ENCODE measurements at regions of chr22 and their contacts with region 1.

Region 1: DNA sequence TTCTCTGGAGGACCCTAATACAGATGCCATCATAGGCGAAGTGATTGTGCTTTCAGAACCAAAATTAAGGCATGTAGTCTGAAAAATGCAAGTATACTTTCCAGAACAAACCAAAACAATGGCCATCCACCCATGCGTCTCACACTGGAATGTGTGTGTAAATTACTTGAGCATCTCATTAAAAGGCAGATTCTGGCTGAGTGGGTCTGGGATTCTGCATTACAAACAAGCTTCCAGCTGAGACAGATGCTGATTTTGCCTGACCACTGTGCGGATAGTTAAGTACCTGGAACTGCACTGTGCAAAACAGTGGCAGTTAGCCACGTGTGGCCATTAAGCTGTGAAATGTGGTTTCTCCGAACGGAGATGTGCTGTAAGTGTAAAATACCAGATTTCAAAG is 26.2 kb downstream of the RRP7A start:
- DNase-seq: no peak
- H3K4me3 ChIP-seq: no peak overlapping the region
- H3K27ac ChIP-seq: no peak overlapping the region
- H3K4me1 ChIP-seq: peaks cover 14% of the 10 kb centered on the region
- H3K27me3 ChIP-seq: no peaks in the 10 kb centered on the region
- CTCF ChIP-seq: no peak

Region 2: DNA sequence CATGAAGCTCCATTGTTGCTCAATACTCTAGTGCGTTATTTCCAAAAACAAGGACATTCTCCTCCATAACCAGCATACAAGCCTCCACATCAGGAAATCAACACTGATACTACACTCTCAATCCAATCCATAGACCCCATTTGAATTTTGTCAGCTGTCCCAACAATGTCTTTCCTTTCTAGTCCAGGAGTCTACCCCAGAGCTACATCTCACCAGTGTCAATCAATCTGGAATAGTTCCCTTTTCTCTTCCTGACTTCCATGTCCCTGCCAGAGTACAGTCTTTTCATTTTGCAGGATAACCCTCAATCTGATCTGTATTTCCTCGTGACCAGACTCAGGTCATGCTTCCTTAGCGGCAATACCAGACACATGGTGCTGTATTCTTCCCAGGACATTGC is 266.0 kb before region 1 on chr22:
- CTCF ChIA-PET with region 1: interaction called, 13 read pairs
- POLR2A ChIA-PET with region 1: no interaction called
- intact Hi-C with region 1: no loop called
- DNase-seq: no peak
- H3K4me3 ChIP-seq: no peak overlapping the region
- H3K27ac ChIP-seq: no peak overlapping the region
- H3K4me1 ChIP-seq: no peaks in the 10 kb centered on the region
- H3K27me3 ChIP-seq: no peaks in the 10 kb centered on the region
- CTCF ChIP-seq: no peak

Region 3: DNA sequence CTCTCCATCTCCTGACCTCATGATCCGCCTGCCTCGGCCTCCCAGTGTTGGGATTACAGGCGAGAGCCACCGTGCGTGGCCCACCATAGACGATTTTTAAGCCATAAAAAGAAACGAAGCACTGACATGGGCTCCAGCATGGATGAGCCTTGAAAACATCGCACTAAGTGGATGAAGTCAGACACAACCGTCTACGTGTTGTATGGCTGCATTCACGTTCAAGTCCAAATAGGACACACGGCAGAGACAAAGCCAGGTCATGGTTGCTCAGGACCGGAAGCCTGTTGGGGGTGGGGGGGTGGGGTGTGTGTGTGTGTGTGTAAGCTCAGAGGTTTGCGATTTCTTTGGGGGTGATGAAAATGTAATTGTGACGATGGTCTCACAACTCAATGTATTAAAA is 16.2 kb after region 1 on chr22:
- CTCF ChIA-PET with region 1: no interaction called
- POLR2A ChIA-PET with region 1: no interaction called
- intact Hi-C with region 1: no loop called
- DNase-seq: no peak
- H3K4me3 ChIP-seq: no peak overlapping the region
- H3K27ac ChIP-seq: no peak overlapping the region
- H3K4me1 ChIP-seq: no peaks in the 10 kb centered on the region
- H3K27me3 ChIP-seq: no peaks in the 10 kb centered on the region
- CTCF ChIP-seq: no peak